ENCODE measurements at regions of chr11 and their contacts with region 1.

Region 1: GRCh38 chr11:117843666-117844484 is 19.3 kb upstream of the FXYD2 start:
- DNase-seq: peak; percentile 86
- H3K4me3 ChIP-seq: no peak overlapping the region
- H3K27ac ChIP-seq: no peak overlapping the region
- H3K4me1 ChIP-seq: no peaks in the 10 kb centered on the region
- H3K27me3 ChIP-seq: no peaks in the 10 kb centered on the region
- CTCF ChIP-seq: peak; percentile 99

Region 2: DNA sequence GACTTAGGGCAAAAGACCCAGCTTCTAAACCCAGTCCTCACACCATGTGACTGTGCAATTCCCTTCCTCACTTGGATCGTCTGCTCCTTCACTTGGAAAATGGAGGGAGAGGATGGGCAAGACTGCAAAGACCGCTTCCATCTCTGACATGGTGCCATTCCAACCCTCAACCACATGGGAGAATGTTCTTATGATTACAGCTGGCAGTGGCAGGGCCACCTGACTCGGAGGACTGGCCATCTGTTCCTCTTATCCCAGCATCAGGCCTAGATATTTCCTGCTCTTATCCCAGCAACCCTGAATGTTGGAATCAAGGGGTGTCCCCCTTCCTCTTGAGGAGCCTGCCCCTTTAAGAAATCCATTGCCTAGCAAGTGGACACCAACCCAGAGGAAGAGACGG is 62.2 kb before region 1 on chr11:
- intact Hi-C with region 1: no loop called
- DNase-seq: no peak
- H3K4me3 ChIP-seq: no peak overlapping the region
- H3K27ac ChIP-seq: no peak overlapping the region
- H3K4me1 ChIP-seq: no peaks in the 10 kb centered on the region
- H3K27me3 ChIP-seq: no peaks in the 10 kb centered on the region
- CTCF ChIP-seq: no peak

Region 3: GRCh38 chr11:117946842-117947526 is 103.1 kb after region 1 on chr11:
- intact Hi-C with region 1: loop called (anchors 2 kb)
- DNase-seq: peak; percentile 89
- H3K4me3 ChIP-seq: no peak overlapping the region
- H3K27ac ChIP-seq: no peak overlapping the region
- H3K4me1 ChIP-seq: no peaks in the 10 kb centered on the region
- H3K27me3 ChIP-seq: no peaks in the 10 kb centered on the region
- CTCF ChIP-seq: peak; percentile 98